ENCODE measurements at regions of chr1 and their contacts with region 1.

Region 1: DNA sequence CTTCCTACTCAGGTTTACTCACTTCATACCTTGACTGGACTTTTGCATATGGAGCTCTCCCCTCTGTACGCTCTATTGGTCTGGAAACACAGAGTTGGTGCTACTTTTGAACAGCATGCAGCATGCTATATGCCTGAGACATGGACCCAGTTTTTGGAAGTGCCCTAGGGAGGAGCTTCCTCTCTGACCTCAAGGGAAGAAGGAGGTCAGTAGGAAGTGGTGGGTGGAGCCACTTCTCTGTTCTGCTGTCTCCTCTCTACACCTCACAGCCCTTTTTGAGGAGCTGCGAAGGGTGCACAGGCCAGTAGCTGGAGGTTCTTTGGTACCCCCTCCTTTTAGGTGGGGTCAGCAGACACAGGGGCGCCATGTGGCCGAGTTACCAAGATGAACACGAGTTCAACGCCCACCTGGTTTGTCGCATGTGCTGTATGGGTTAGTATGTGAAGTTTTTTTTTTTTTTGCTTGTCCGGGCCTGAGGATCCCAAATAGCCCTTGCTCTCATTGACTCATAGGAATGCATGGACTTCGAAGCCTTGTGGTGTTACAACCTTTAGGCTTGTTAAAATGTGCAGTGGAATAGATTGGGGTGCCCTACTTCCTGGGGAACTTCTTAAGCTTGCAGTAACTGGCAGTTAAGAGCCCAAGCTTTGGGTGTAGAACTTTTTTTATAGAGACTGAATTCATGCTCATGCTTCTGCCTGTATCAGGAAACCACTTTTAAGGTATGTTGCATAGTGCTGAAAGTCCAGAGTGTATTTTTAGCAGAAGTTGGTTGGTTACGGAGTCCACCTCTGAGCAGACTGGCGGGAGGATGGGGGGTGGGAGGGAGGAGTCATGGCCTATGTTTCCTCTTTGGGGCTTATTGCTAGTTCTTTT is 10.7 kb downstream of the MACF1 start:
- DNase-seq: peak in 23 of 35 experiments; percentile 16 to 60 (median 32)
- ATAC-seq: peak; percentile 76 to 82 (median 76)
- H3K4me3 ChIP-seq: peak overlapping the region; percentile 67 to 75
- H3K4me3 Mint-ChIP-seq: peak overlapping the region; percentile 84 to 93 (median 90)
- H3K27ac ChIP-seq: peak overlapping the region; percentile 72
- H3K27ac Mint-ChIP-seq: peak overlapping the region; percentile 95
- H3K4me1 ChIP-seq: peaks cover 6 to 41% of the 10 kb centered on the region in 2 experiments
- H3K4me1 Mint-ChIP-seq: peaks cover 52 to 61% (median 58%) of the 10 kb centered on the region in 3 donors
- H3K27me3 ChIP-seq: no peaks in the 10 kb centered on the region
- H3K27me3 Mint-ChIP-seq: no peaks in the 10 kb centered on the region

Region 2: GRCh38 chr1:39177682-39178081 is 37.6 kb before region 1 on chr1:
- CTCF ChIA-PET with region 1: no interaction called
- POLR2A ChIA-PET with region 1: no interaction called
- DNase-seq: no peak
- ATAC-seq: no peak
- H3K4me3 ChIP-seq: no peak overlapping the region
- H3K4me3 Mint-ChIP-seq: no peak overlapping the region
- H3K27ac ChIP-seq: no peak overlapping the region
- H3K27ac Mint-ChIP-seq: no peak overlapping the region
- H3K4me1 ChIP-seq: no peaks in the 10 kb centered on the region
- H3K4me1 Mint-ChIP-seq: no peaks in the 10 kb centered on the region
- H3K27me3 ChIP-seq: no peaks in the 10 kb centered on the region
- H3K27me3 Mint-ChIP-seq: no peaks in the 10 kb centered on the region

Region 3: GRCh38 chr1:39189592-39190041 is 25.6 kb before region 1 on chr1:
- CTCF ChIA-PET with region 1: interaction called, 10 to 71 read pairs
- POLR2A ChIA-PET with region 1: interaction called, 3 to 5 read pairs
- DNase-seq: no peak
- ATAC-seq: no peak
- H3K4me3 ChIP-seq: no peak overlapping the region
- H3K4me3 Mint-ChIP-seq: no peak overlapping the region
- H3K27ac ChIP-seq: no peak overlapping the region
- H3K27ac Mint-ChIP-seq: no peak overlapping the region
- H3K4me1 ChIP-seq: peaks cover 31 to 35% of the 10 kb centered on the region in 2 experiments
- H3K4me1 Mint-ChIP-seq: peaks cover 58 to 79% (median 70%) of the 10 kb centered on the region in 3 donors
- H3K27me3 ChIP-seq: no peaks in the 10 kb centered on the region
- H3K27me3 Mint-ChIP-seq: no peaks in the 10 kb centered on the region

Region 4: GRCh38 chr1:39226836-39227235 is 11.6 kb after region 1 on chr1:
- CTCF ChIA-PET with region 1: interaction called, 7 to 11 read pairs
- POLR2A ChIA-PET with region 1: interaction called, 3 to 9 read pairs
- DNase-seq: no peak
- ATAC-seq: no peak
- H3K4me3 ChIP-seq: no peak overlapping the region
- H3K4me3 Mint-ChIP-seq: no peak overlapping the region
- H3K27ac ChIP-seq: no peak overlapping the region
- H3K27ac Mint-ChIP-seq: peak overlapping the region; percentile 70 to 79
- H3K4me1 ChIP-seq: peaks cover 26 to 46% of the 10 kb centered on the region in 2 experiments
- H3K4me1 Mint-ChIP-seq: peaks cover 80 to 81% (median 80%) of the 10 kb centered on the region in 3 donors
- H3K27me3 ChIP-seq: no peaks in the 10 kb centered on the region
- H3K27me3 Mint-ChIP-seq: no peaks in the 10 kb centered on the region

Region 5: DNA sequence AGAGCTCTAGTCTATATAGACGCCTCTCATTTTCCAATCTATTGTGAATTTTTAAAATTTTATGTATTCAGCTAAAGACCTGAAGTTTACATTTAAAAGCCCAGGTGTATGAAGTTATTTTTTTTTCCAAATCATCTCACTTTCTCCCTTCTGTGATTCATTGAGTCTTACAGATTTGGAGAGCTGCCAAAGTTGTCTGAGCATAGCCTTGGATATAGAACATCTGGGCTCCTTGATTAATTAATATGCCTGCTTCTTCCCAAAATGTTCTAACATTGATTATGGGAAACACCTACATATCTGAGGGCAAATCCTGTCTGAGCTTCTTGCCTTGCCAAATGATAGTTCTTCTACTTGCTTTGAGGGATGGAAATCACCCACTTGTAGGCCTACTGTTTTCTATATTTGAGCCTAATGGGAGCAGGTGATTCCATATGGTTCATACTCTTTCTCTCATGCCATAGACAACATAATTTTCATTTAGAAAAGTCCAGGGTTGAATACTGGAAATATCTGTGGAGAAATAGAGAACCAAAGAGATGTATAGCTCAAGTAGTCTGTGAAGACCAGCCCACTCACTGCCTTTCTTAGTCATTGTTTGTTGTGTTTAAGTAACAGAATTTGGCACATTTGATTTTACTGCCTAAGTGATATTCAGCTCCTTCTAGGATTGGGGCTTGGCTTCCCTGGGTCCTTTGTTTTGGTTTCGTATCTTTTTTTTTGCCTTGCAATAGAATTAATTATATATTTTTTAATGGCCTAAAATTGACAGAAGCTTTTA is 35.4 kb after region 1 on chr1:
- CTCF ChIA-PET with region 1: no interaction called
- POLR2A ChIA-PET with region 1: interaction called, 6 to 10 read pairs
- DNase-seq: no peak
- ATAC-seq: no peak
- H3K4me3 ChIP-seq: no peak overlapping the region
- H3K4me3 Mint-ChIP-seq: no peak overlapping the region
- H3K27ac ChIP-seq: peak overlapping the region; percentile 6
- H3K27ac Mint-ChIP-seq: peak overlapping the region; percentile 46 to 70
- H3K4me1 ChIP-seq: no peaks in the 10 kb centered on the region
- H3K4me1 Mint-ChIP-seq: peaks cover 44 to 49% (median 48%) of the 10 kb centered on the region in 3 donors
- H3K27me3 ChIP-seq: no peaks in the 10 kb centered on the region
- H3K27me3 Mint-ChIP-seq: no peaks in the 10 kb centered on the region

Measured in T-cell (primary cell).